A549 (cell line): ENCODE measurements at regions of chr9 and their contacts with region 1.

Region 1: GRCh38 chr9:101449140-101449721 is 13.7 kb upstream of the ALDOB start:
- DNase-seq: peak; percentile 86 to 89
- ATAC-seq: peak; percentile 99 to 100
- H3K4me3 ChIP-seq: peak overlapping the region; percentile 49
- H3K27ac ChIP-seq: peak overlapping the region; percentile 85 to 92
- H3K4me1 ChIP-seq: 0 out of 3 replicates have a peak, but pooled peaks cover 4% of the 10 kb centered on the region
- CTCF ChIP-seq: peak; percentile 79
- EP300 ChIP-seq: no peak
- POLR2A ChIP-seq: no peak
- RAD21 ChIP-seq: peak; percentile 55 to 75

Region 2: DNA sequence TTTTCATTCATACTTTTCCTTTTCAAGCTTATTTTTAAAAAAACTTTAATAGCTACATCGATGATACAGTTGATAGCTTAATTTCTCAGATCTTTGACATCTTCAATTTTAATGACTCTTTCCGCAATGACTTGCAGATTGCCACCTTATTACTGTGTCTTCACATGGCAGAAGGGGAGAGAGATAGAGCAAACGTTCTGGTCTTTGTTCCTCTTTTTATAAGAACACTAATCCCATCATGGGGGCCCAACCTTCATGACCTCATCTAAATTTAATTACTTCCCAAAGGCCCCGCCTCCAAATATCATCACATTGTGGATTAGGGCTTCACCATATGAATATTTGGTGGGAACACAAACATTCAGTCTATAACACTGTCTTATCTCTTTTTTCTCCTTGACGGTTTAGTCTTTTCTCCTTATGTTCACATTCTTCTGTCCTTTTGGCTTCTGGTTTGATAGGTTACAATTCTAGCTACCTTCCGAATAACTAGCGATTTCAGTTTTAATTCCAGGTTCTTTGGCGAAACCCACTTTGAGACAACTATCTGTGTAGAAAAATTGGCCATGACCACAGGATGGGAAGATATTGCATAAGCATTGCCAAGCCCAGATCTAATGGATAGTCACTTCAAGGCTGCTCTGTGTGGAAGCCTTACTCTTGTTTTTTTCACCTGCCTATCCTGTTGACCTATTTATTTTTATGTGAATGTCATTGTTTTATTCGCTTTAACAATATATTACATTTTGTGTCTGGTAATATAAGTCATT is 45.5 kb before region 1 on chr9:
- CTCF ChIA-PET with region 1: interaction called, 10 read pairs
- POLR2A ChIA-PET with region 1: interaction called, 3 read pairs
- DNase-seq: no peak
- ATAC-seq: no peak
- H3K4me3 ChIP-seq: no peak overlapping the region
- H3K27ac ChIP-seq: no peak overlapping the region
- H3K4me1 ChIP-seq: peaks cover 5% of the 10 kb centered on the region; the same call in 1 of the 3 replicates
- CTCF ChIP-seq: no peak
- EP300 ChIP-seq: no peak
- POLR2A ChIP-seq: no peak
- RAD21 ChIP-seq: no peak

Region 3: GRCh38 chr9:101421653-101422065 is 27.6 kb before region 1 on chr9:
- CTCF ChIA-PET with region 1: interaction called, 10 read pairs
- POLR2A ChIA-PET with region 1: no interaction called
- DNase-seq: peak in 1 of 2 experiments; percentile 12
- ATAC-seq: peak in 1 of 2 experiments; percentile 42; a peak in 1 of 6 replicates
- H3K4me3 ChIP-seq: no peak overlapping the region
- H3K27ac ChIP-seq: no peak overlapping the region
- H3K4me1 ChIP-seq: no peaks in the 10 kb centered on the region
- CTCF ChIP-seq: no peak
- EP300 ChIP-seq: no peak
- POLR2A ChIP-seq: no peak
- RAD21 ChIP-seq: no peak

Region 4: DNA sequence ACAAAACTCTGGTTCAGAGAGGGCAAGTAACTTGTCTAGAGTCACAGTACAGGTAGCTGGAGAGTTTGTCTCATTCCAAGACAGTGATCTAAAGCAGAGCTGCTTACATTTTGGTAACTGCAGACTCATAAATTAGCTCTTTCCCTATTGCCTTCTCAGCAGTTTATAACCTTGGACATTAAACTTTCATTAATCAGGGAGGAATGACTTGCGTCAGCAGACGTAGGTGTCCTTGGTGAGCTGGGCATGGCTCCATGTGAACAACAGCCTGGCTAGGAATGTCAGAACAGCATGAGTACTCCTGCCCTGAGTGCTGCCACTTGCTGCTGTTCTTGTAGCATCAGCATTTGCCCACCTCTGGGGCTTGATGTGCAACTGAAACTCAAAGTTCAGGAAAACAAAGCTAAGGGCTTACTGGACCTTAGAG is 11.4 kb before region 1 on chr9:
- CTCF ChIA-PET with region 1: interaction called, 16 read pairs
- POLR2A ChIA-PET with region 1: no interaction called
- DNase-seq: no peak
- ATAC-seq: no peak
- H3K4me3 ChIP-seq: no peak overlapping the region
- H3K27ac ChIP-seq: no peak overlapping the region
- H3K4me1 ChIP-seq: no peaks in the 10 kb centered on the region
- CTCF ChIP-seq: no peak
- EP300 ChIP-seq: no peak
- POLR2A ChIP-seq: no peak
- RAD21 ChIP-seq: no peak

Region 5: DNA sequence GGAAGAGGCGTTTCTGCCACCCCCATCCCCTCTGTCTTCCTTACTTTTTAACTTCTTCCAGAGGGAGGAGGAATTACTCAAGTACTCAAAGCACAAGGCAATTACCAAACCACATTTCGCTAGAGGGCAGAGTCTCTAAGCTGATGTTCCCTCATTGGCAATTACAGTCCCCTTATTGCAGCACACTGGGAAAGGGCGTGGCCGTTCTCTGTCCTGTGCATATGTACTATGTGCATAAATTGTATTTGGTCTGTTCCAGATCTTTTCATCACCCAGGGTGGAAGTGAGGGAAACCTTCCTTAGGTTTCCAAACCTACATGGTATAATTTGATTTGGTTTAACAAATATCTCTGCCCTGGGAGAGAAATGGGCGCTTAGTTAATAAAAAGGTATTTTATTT is 16.2 kb after region 1 on chr9:
- CTCF ChIA-PET with region 1: interaction called, 28 read pairs
- POLR2A ChIA-PET with region 1: no interaction called
- DNase-seq: peak; percentile 36 to 77
- ATAC-seq: peak; percentile 83 to 95
- H3K4me3 ChIP-seq: no peak overlapping the region
- H3K27ac ChIP-seq: no peak overlapping the region
- H3K4me1 ChIP-seq: peaks cover 3% of the 10 kb centered on the region; the same call in 1 of the 3 replicates
- CTCF ChIP-seq: peak; percentile 45
- EP300 ChIP-seq: no peak
- POLR2A ChIP-seq: no peak
- RAD21 ChIP-seq: peak; percentile 40 to 53; a peak in 4 of 5 replicates

Region 6: DNA sequence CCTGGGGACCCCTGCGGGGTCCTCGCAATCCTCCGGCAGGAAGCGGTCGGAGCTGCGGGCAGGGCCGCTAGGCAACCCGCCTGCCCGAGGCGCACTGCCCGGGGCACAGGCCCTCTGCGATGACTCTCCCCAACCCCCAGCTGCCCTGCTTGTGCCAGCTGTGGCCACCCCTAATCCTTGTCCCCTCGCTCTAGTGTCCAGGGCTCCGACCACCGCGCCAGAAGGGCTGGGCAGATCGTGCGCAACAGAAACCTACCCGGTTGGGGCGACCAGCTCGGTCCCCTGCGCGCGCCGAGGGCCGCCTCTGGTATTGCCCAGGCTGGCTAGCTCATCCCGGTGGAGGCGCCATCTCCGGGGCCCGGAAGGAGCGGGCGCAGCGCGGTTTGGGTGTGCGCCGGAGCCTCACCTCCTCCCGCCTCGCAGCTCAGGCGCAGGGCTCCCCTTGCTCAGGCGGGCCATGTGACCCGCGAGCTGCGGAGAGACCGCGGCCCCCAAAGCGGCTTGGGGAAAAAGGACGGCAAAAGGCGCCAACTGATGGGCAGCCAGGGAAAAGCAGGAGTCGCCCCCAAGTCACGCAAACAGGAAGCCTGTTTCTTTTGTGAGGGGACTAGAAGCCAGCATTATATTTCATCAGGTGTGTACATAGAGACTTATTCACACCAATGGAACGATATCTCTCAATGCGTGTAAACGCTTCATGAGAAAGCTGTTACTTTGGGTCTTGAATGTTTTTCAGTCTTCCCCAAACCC is 37.6 kb after region 1 on chr9:
- CTCF ChIA-PET with region 1: interaction called, 15 read pairs
- POLR2A ChIA-PET with region 1: interaction called, 3 read pairs
- DNase-seq: peak; percentile 73 to 81
- ATAC-seq: peak; percentile 93 to 96
- H3K4me3 ChIP-seq: peak overlapping the region; percentile 73
- H3K27ac ChIP-seq: peak overlapping the region; percentile 86 to 97
- H3K4me1 ChIP-seq: peaks cover 10% of the 10 kb centered on the region; the same call in 2 of the 3 replicates
- CTCF ChIP-seq: peak; percentile 39
- EP300 ChIP-seq: no peak
- POLR2A ChIP-seq: peak; percentile 62
- RAD21 ChIP-seq: peak; percentile 39 to 53; a peak in 4 of 5 replicates

Region 7: DNA sequence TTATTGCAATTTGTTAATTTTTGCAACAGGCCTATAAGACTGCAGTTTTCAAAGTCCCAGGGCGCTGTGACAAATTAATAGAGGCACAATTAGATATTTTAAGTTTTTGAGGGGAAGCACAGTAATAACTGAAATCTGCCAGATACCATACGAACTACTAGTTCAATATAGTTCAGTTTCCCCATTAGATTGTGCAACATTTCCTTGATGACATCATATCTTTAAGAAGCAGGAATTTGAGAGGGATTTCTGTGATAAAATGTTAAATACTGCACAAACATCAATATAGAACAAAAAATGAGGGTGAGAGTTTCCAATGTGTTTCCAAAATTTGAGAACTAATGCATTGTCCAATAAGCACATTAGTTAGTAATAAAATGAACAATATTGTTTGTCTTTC is 345.9 kb after region 1 on chr9:
- CTCF ChIA-PET with region 1: no interaction called
- POLR2A ChIA-PET with region 1: no interaction called
- DNase-seq: no peak
- ATAC-seq: no peak
- H3K4me3 ChIP-seq: no peak overlapping the region
- H3K27ac ChIP-seq: no peak overlapping the region
- H3K4me1 ChIP-seq: no peaks in the 10 kb centered on the region
- CTCF ChIP-seq: no peak
- EP300 ChIP-seq: no peak
- POLR2A ChIP-seq: no peak
- RAD21 ChIP-seq: no peak